ENCODE measurements at regions of chr1 and their contacts with region 1.

Region 1: DNA sequence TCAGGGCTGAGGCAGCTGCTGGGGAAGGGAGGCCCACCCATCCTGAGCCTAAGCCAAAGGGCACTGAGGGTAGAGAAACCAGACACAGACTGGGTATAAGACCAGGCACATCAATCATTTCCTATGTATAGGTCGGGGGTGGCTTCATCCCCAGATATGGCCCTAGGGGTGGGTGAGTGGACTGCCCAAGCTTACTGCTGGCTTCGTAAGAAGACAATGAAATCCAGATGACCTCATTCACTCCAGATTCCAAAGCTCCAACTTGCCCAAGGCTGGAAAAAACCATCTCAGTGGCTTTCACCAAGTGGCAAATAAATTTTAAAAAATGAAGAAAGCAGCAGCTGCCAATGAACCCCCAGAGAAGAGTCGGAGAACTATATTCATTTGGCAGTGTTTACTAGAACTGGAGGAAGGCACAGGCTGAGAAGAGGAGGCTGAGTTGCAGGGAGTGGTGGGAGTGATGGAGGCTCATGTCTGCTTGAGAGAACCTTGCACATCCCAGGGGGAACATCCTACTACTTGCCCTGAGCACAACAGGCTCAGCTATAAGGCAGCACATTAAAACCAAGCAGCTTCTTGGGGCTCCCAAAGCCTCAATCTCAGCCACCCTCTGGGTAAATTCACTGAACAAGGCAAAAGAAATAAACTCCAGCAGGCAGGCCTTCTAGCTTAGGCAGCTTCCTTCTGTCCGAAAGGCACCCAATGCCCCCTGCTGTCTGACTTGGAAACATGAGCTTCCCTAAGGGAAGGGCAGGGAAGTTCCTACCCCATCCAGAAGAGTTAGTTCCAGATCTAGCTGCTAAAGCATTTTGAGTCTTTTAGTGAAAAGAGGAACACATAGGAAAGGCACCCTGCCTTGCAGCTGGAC is 14.1 kb downstream of the PEA15 start:
- DNase-seq: peak; percentile 71
- H3K4me3 ChIP-seq: no peak overlapping the region
- H3K27ac ChIP-seq: peak overlapping the region; percentile 63
- H3K4me1 ChIP-seq: peaks cover 47% of the 10 kb centered on the region
- H3K27me3 ChIP-seq: no peaks in the 10 kb centered on the region
- CTCF ChIP-seq: peak; percentile 46 to 66

Region 2: DNA sequence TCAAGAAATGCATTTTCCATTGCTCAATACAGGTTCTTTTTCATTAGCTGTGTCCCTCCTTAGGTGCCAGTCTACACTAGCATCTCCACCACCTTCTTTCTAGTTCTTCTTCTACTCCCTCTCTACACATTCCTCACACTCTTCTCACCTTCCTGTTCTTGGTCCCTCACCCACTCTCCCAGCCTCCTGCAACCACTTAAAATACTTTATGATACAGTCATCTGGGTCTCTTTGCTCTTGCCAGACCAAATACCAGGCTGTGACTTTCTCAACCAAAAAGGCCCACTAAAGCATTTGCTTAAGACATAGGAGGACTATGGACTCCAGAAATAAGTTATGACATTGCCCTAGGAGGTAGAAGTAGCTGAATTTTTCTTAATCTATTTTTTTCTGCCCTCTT is 222.6 kb before region 1 on chr1:
- CTCF ChIA-PET with region 1: no interaction called
- dilution Hi-C with region 1: no loop called
- in situ Hi-C with region 1: no loop called
- intact Hi-C with region 1: no loop called
- DNase-seq: peak; percentile 83
- H3K4me3 ChIP-seq: no peak overlapping the region
- H3K27ac ChIP-seq: no peak overlapping the region
- H3K4me1 ChIP-seq: peaks cover 16% of the 10 kb centered on the region
- H3K27me3 ChIP-seq: no peaks in the 10 kb centered on the region
- CTCF ChIP-seq: no peak

Region 3: GRCh38 chr1:160205242-160206035 is 13.9 kb before region 1 on chr1 and contains the start of gene PEA15:
- CTCF ChIA-PET with region 1: interaction called, 3 read pairs
- dilution Hi-C with region 1: no loop called
- in situ Hi-C with region 1: no loop called
- intact Hi-C with region 1: loop called (anchors 1 kb)
- DNase-seq: peak; percentile 52
- H3K4me3 ChIP-seq: peak within 1 kb of the TSS; percentile 91 to 99 (median 99)
- H3K27ac ChIP-seq: peak within 1 kb of the TSS; percentile 89
- H3K4me1 ChIP-seq: peaks cover 23% of the 10 kb centered on the region
- H3K27me3 ChIP-seq: no peaks in the 10 kb centered on the region
- CTCF ChIP-seq: no peak
- total RNA-seq, gene PEA15: 132 to 206 TPM

Region 4: DNA sequence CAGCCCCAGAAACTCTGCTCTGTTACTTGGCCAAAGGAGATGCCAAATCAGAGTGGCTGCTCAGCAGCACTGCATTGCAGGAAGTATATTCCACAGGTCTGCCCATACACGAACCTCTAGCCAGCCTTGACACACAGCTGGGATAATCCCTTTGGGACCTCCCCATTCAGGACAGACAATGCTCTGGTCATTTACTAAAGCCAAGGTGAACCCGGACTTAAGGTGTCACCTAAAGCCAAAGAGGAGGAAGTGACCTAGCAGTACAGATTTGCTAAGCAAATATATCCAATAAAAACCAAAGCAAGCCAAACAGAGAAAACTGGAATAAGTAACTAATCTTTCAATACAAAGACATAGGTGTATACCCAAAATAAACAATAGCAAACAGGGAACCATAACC is 96.1 kb after region 1 on chr1:
- CTCF ChIA-PET with region 1: no interaction called
- dilution Hi-C with region 1: loop called (anchors 5 kb)
- in situ Hi-C with region 1: no loop called
- intact Hi-C with region 1: no loop called
- DNase-seq: no peak
- H3K4me3 ChIP-seq: no peak overlapping the region
- H3K27ac ChIP-seq: no peak overlapping the region
- H3K4me1 ChIP-seq: no peaks in the 10 kb centered on the region
- H3K27me3 ChIP-seq: no peaks in the 10 kb centered on the region
- CTCF ChIP-seq: no peak